Heart left ventricle (tissue), 16 donors: ENCODE measurements at regions of chr4 and their contacts with region 1.

Region 1: DNA sequence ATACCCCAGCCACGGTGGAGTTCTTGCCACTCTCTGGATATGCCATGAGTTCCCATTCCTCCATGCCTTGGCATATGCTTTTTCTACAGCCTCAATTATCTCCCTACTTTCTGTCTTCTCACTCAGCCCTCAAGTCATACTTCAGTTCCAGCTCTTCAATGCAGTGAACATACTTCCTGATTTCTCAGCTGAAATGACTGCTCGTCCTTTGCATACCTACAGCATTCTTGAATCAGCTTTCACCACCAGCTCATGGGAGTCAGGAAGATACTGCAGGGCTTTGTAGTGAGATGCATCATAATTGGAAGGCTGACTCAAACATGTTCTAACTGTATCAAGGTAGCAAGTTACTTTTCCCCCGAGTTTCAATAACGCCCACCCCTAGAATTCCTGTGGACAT is 118.4 kb downstream of the APBB2 start:
- DNase-seq: no peak
- ATAC-seq: no peak
- H3K4me3 ChIP-seq: no peak overlapping the region
- H3K27ac ChIP-seq: no peak overlapping the region
- H3K4me1 ChIP-seq: peaks cover 0 to 65% (median 7%) of the 10 kb centered on the region in 12 donors
- H3K27me3 ChIP-seq: no peaks in the 10 kb centered on the region
- CTCF ChIP-seq: no peak
- POLR2A ChIP-seq: no peak

Region 2: GRCh38 chr4:40377582-40378550 is 718.1 kb before region 1 on chr4:
- intact Hi-C with region 1: no loop called
- DNase-seq: no peak
- ATAC-seq: no peak
- H3K4me3 ChIP-seq: no peak overlapping the region
- H3K27ac ChIP-seq: no peak overlapping the region
- H3K4me1 ChIP-seq: no peaks in the 10 kb centered on the region
- H3K27me3 ChIP-seq: no peaks in the 10 kb centered on the region
- CTCF ChIP-seq: no peak
- POLR2A ChIP-seq: no peak

Region 3: GRCh38 chr4:41050866-41051775 is 44.9 kb before region 1 on chr4:
- intact Hi-C with region 1: loop called in 3 of 10 experiments (anchors 5 to 10 kb)
- DNase-seq: peak in 4 of 5 donors; percentile 28 to 62 (median 50)
- ATAC-seq: peak; percentile 64 to 93 (median 81)
- H3K4me3 ChIP-seq: peak overlapping the region in 10 of 12 donors; percentile 6 to 60 (median 38)
- H3K27ac ChIP-seq: peak overlapping the region; percentile 57 to 90 (median 78)
- H3K4me1 ChIP-seq: peaks cover 0 to 46% (median 19%) of the 10 kb centered on the region in 12 donors
- H3K27me3 ChIP-seq: no peaks in the 10 kb centered on the region
- CTCF ChIP-seq: no peak
- POLR2A ChIP-seq: no peak